Posterior vena cava (tissue), 2 donors: ENCODE measurements at regions of chr10 and their contacts with region 1.

Region 1: DNA sequence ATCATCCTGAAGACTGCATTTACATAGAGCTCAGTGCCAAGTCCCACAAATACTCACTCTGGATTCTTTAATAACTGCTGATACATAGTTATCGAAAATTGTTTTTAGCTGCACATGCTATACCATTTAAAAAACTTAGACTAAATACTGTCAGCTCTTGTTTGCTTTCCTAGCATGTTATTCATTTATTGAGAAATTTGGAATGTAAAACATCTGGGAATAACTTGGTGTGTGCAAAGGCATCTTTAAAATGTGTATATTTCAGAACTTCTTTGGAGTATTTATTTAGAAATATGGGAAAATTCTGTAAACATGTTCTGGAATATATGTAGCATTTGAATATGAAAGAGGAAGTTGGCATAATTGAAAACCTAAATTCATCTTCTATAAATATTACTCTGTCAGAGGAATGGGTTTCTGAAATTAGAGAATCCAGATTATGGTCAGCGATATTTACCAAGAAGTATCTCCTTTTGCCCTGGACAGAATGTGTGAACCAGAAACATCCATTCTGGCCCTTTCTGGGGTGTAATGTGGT is 119.7 kb downstream of the ARID5B start:
- DNase-seq: no peak

Region 2: DNA sequence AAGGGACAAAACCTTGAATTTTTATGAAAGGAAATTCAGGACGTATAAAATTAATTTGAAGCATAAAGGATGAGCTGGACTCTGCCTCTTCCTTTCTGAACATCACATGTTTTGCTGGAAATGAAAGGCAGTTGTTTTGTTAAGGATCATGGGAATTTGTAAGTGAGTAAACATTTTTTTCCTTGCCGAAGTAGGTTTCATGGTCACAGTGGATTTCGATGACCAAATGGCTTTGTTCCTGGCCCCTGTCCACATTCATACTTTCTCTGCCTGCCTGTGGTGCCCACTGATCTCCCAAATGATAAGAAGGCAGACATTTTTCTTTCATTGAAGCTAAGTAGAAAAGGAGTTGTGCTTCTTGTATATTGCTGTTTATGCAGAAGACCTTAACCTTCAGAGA is 15.5 kb before region 1 on chr10:
- intact Hi-C with region 1: loop called in 1 of 2 experiments (anchors 1 kb)
- DNase-seq: no peak